ENCODE measurements at regions of chr15 and their contacts with region 1.

Region 1: GRCh38 chr15:91007266-91007665 is 12.9 kb upstream of the PRC1 start:
- DNase-seq: no peak
- ATAC-seq: no peak
- H3K4me3 ChIP-seq: no peak overlapping the region
- H3K4me3 Mint-ChIP-seq: no peak overlapping the region
- H3K27ac ChIP-seq: no peak overlapping the region
- H3K27ac Mint-ChIP-seq: no peak overlapping the region
- H3K4me1 ChIP-seq: no peaks in the 10 kb centered on the region
- H3K4me1 Mint-ChIP-seq: no peaks in the 10 kb centered on the region
- H3K27me3 ChIP-seq: no peaks in the 10 kb centered on the region
- H3K27me3 Mint-ChIP-seq: no peaks in the 10 kb centered on the region
- CTCF ChIP-seq: no peak

Region 2: DNA sequence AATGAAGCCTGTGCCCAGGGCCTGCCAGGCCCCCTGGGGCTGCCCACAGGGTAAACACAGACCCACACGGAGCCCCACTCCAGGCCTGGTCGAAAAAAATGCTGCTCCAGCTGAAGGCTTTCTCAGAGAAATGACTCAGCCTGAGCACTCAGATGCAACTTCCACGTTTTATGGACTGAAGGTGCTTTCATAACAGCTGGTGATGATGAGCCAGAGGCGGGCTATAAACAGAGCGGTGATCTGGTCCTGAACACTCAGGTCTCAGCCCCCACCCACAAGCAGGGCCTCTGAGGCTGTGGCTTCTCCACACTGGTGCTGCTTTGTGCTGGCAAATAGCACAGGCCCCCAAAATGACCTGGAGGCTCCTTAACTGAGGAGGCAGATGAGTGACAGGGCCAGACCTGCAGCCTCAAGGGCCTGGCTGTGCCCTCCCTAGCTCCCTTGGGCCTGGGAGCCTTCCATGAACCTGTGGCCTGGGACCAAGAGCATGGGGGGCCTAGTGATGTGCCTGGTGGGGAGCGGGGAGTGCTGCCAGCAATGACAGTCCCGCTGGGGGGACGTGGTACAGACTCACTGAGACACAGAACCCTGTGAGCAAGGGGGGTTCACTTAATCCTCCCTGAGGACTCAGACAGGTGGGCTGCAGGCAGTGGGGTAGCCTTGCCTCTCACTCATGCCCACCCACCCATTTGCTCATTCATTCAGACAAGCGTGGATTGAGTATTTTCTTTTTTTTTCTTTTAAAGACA is 161.9 kb before region 1 on chr15:
- CTCF ChIA-PET with region 1: no interaction called
- POLR2A ChIA-PET with region 1: no interaction called
- intact Hi-C with region 1: no loop called
- DNase-seq: peak in 4 of 14 experiments; percentile 12 to 72 (median 52)
- ATAC-seq: peak; percentile 48
- H3K4me3 ChIP-seq: no peak overlapping the region
- H3K4me3 Mint-ChIP-seq: no peak overlapping the region
- H3K27ac ChIP-seq: no peak overlapping the region
- H3K27ac Mint-ChIP-seq: no peak overlapping the region
- H3K4me1 ChIP-seq: peaks cover 6% of the 10 kb centered on the region
- H3K4me1 Mint-ChIP-seq: peaks cover under 1% of the 10 kb centered on the region
- H3K27me3 ChIP-seq: no peaks in the 10 kb centered on the region
- H3K27me3 Mint-ChIP-seq: no peaks in the 10 kb centered on the region
- CTCF ChIP-seq: no peak

Region 3: GRCh38 chr15:90895336-90896117 is 111.7 kb before region 1 on chr15:
- CTCF ChIA-PET with region 1: no interaction called
- POLR2A ChIA-PET with region 1: no interaction called
- intact Hi-C with region 1: no loop called
- DNase-seq: no peak
- ATAC-seq: no peak
- H3K4me3 ChIP-seq: no peak overlapping the region
- H3K4me3 Mint-ChIP-seq: no peak overlapping the region
- H3K27ac ChIP-seq: no peak overlapping the region
- H3K27ac Mint-ChIP-seq: no peak overlapping the region
- H3K4me1 ChIP-seq: no peaks in the 10 kb centered on the region
- H3K4me1 Mint-ChIP-seq: no peaks in the 10 kb centered on the region
- H3K27me3 ChIP-seq: no peaks in the 10 kb centered on the region
- H3K27me3 Mint-ChIP-seq: no peaks in the 10 kb centered on the region
- CTCF ChIP-seq: no peak

Region 4: DNA sequence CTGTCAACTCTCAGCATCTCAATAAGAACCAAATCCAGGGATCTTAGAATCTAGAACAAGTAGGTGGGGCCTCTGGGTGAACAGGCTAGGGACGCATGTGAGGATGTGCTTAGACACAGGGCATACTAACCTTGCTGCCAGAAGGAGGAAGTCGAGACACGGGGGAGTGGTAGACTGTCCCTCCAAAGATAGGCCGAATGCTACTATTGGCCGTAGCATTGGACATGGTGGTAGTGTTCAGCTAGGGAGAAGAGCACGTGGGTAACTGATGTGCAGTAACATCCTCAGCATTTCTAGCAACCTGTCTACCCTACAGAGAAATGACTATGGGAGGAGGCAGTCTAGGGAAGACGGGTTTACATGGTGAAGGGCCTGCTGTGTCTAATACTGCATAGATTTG is 37.0 kb before region 1 on chr15:
- CTCF ChIA-PET with region 1: no interaction called
- POLR2A ChIA-PET with region 1: no interaction called
- intact Hi-C with region 1: no loop called
- DNase-seq: no peak
- ATAC-seq: no peak
- H3K4me3 ChIP-seq: no peak overlapping the region
- H3K4me3 Mint-ChIP-seq: no peak overlapping the region
- H3K27ac ChIP-seq: no peak overlapping the region
- H3K27ac Mint-ChIP-seq: no peak overlapping the region
- H3K4me1 ChIP-seq: no peaks in the 10 kb centered on the region
- H3K4me1 Mint-ChIP-seq: no peaks in the 10 kb centered on the region
- H3K27me3 ChIP-seq: no peaks in the 10 kb centered on the region
- H3K27me3 Mint-ChIP-seq: no peaks in the 10 kb centered on the region
- CTCF ChIP-seq: no peak

Region 5: GRCh38 chr15:91027677-91028076 is 20.4 kb after region 1 on chr15:
- CTCF ChIA-PET with region 1: no interaction called
- POLR2A ChIA-PET with region 1: interaction called, 3 read pairs
- intact Hi-C with region 1: loop called in 1 of 2 experiments (anchors 2 kb)
- DNase-seq: no peak
- ATAC-seq: no peak
- H3K4me3 ChIP-seq: no peak overlapping the region
- H3K4me3 Mint-ChIP-seq: no peak overlapping the region
- H3K27ac ChIP-seq: no peak overlapping the region
- H3K27ac Mint-ChIP-seq: no peak overlapping the region
- H3K4me1 ChIP-seq: peaks cover 4% of the 10 kb centered on the region
- H3K4me1 Mint-ChIP-seq: peaks cover 7% of the 10 kb centered on the region
- H3K27me3 ChIP-seq: no peaks in the 10 kb centered on the region
- H3K27me3 Mint-ChIP-seq: no peaks in the 10 kb centered on the region
- CTCF ChIP-seq: no peak

Region 6: GRCh38 chr15:91047545-91048199 is 40.4 kb after region 1 on chr15:
- CTCF ChIA-PET with region 1: no interaction called
- POLR2A ChIA-PET with region 1: no interaction called
- intact Hi-C with region 1: no loop called
- DNase-seq: peak in 3 of 14 experiments; percentile 18 to 32 (median 27)
- ATAC-seq: no peak
- H3K4me3 ChIP-seq: no peak overlapping the region
- H3K4me3 Mint-ChIP-seq: no peak overlapping the region
- H3K27ac ChIP-seq: no peak overlapping the region
- H3K27ac Mint-ChIP-seq: no peak overlapping the region
- H3K4me1 ChIP-seq: peaks cover 9% of the 10 kb centered on the region
- H3K4me1 Mint-ChIP-seq: peaks cover 30% of the 10 kb centered on the region
- H3K27me3 ChIP-seq: peaks cover 0 to under 1% of the 10 kb centered on the region in 2 experiments
- H3K27me3 Mint-ChIP-seq: peaks cover 4% of the 10 kb centered on the region
- CTCF ChIP-seq: no peak

Measured in CD4-positive, alpha-beta T cell (primary cell).